ENCODE measurements at regions of chr6 and their contacts with region 1.

Region 1: DNA sequence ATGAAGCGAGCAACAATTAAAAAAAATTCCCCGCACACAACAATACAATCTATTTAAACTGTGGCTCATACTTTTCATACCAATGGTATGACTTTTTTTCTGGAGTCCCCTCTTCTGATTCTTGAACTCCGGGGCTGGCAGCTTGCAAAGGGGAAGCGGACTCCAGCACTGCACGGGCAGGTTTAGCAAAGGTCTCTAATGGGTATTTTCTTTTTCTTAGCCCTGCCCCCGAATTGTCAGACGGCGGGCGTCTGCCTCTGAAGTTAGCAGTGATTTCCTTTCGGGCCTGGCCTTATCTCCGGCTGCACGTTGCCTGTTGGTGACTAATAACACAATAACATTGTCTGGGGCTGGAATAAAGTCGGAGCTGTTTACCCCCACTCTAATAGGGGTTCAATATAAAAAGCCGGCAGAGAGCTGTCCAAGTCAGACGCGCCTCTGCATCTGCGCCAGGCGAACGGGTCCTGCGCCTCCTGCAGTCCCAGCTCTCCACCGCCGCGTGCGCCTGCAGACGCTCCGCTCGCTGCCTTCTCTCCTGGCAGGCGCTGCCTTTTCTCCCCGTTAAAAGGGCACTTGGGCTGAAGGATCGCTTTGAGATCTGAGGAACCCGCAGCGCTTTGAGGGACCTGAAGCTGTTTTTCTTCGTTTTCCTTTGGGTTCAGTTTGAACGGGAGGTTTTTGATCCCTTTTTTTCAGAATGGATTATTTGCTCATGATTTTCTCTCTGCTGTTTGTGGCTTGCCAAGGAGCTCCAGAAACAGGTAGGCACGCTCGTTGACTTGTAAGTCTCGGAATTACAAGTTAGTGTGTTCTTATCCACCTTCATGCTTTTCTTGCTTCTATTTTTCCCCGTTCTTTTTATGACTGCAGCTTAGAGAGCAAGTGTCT is at the start of gene EDN1:
- DNase-seq: peak; percentile 75
- CTCF ChIP-seq: peak; percentile 62

Region 2: DNA sequence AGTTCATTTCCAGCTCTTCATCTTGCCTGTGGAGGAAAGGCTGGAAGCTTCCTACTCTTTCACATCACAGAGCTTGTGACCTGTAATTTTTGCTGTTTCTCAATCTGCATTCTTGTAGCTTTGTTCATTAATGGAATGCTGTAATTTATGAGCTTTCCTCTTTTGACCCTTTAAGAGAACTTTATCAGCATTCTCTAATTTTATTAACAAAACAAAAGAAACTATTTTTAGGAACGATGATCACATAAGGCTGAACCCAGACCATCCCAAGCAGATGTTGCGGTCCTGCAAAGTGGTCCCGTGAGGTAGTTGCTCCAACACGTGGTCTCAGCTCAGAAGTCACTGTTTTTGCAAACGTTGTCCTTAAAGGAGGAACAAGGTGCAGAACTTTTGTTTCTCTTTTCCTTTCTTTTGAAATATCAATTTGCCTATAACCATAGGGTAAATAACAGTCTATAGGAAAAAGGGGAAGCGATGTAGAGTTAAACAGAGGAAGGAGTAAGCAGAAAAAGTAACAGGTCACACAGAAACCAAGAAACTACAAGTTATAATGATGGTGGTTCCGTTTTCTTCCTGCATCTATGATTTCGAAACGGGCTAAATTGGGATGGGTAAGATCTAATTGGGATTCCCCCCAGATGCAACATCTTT is 305.1 kb after region 1 on chr6:
- in situ Hi-C with region 1: loop called (anchors 10 kb)
- DNase-seq: no peak
- CTCF ChIP-seq: no peak